H1 (cell line): ENCODE measurements at regions of chr21 and their contacts with region 1.

Region 1: DNA sequence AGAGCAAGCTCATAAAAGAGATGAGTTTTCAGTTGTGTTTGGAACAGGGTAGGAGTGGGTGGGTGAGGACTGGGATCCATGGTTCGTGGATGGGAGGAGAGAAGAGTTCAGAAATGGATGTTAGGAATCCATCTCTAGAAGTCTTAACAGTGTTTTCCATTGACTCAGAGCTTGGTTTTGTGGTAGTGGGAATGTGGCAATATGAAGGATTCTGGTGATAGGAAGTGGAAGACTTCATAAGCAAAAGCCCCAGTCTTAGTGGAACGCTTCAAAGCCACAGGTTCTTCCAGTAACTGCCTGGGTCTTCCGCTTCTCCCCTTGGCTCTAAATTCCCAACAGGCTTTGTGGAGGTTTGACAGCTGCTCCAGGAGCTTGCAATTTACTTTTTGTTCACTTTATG is 167.9 kb downstream of the KCNJ6 start:
- DNase-seq: no peak
- H3K4me3 ChIP-seq: no peak overlapping the region
- H3K27ac ChIP-seq: no peak overlapping the region
- H3K4me1 ChIP-seq: no peaks in the 10 kb centered on the region; a peak in 1 of 7 replicates
- H3K27me3 ChIP-seq: no peaks in the 10 kb centered on the region
- CTCF ChIP-seq: no peak
- EP300 ChIP-seq: no peak
- POLR2A ChIP-seq: no peak
- RAD21 ChIP-seq: no peak

Region 2: GRCh38 chr21:37711836-37712568 is 36.3 kb before region 1 on chr21:
- CTCF ChIA-PET with region 1: interaction called, 10 read pairs
- POLR2A ChIA-PET with region 1: no interaction called
- DNase-seq: peak; percentile 41 to 77
- H3K4me3 ChIP-seq: no peak overlapping the region
- H3K27ac ChIP-seq: no peak overlapping the region
- H3K4me1 ChIP-seq: peaks cover 0 to 5% (median 0%) of the 10 kb centered on the region in 4 experiments; a peak in 2 of 7 replicates
- H3K27me3 ChIP-seq: no peaks in the 10 kb centered on the region
- CTCF ChIP-seq: peak; percentile 85 to 93 (median 86)
- EP300 ChIP-seq: no peak
- POLR2A ChIP-seq: no peak
- RAD21 ChIP-seq: peak; percentile 89 to 92